Activated CD8-positive, alpha-beta T cell treated with anti-CD3 and anti-CD28 coated beads, Interleukin-2, amount 10 ng/mL, durations not matched to agents 7 days and 5 days (primary cell): ENCODE measurements at regions of chr15 and their contacts with region 1.

Region 1: GRCh38 chr15:88246666-88247446 is 9.7 kb downstream of the NTRK3 start:
- DNase-seq: peak; percentile 76
- ATAC-seq: peak; percentile 89
- H3K4me3 Mint-ChIP-seq: no peak overlapping the region
- H3K27ac Mint-ChIP-seq: no peak overlapping the region
- H3K4me1 Mint-ChIP-seq: no peaks in the 10 kb centered on the region
- H3K27me3 Mint-ChIP-seq: peaks cover 8% of the 10 kb centered on the region

Region 2: GRCh38 chr15:88234711-88235110 is 12.1 kb before region 1 on chr15:
- CTCF ChIA-PET with region 1: interaction called, 12 read pairs
- POLR2A ChIA-PET with region 1: interaction called, 5 read pairs
- DNase-seq: no peak
- ATAC-seq: no peak
- H3K4me3 Mint-ChIP-seq: no peak overlapping the region
- H3K27ac Mint-ChIP-seq: no peak overlapping the region
- H3K4me1 Mint-ChIP-seq: no peaks in the 10 kb centered on the region
- H3K27me3 Mint-ChIP-seq: peaks cover 5% of the 10 kb centered on the region

Region 3: DNA sequence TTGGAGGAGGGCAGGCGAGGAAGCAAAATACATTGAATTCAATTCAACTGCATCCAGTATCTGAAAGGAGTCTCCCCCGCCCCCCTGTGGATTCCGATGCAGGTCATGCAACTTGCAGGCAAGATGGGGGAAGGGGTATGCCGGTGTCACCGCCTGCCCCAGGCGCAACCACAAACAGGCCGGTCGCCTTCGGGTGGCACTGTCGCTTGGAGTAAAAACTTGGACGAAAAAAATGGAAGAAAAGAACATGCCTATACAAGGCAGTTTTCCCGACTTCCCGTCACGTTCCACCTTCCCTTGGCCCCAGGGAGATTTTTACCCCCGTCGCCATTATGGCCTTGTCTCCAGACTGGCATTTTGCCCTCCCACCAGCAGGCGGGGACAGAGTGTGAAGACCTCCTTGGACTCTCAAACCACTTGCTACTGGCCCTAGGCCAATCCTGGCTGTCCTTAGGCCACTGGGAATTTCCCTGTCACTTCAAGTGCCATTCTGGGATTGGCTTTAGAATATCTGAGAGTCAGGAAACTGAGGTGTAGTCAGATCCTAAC is 11.3 kb after region 1 on chr15:
- CTCF ChIA-PET with region 1: interaction called, 11 read pairs
- POLR2A ChIA-PET with region 1: no interaction called
- DNase-seq: no peak
- ATAC-seq: no peak
- H3K4me3 Mint-ChIP-seq: peak overlapping the region; percentile 59
- H3K27ac Mint-ChIP-seq: no peak overlapping the region
- H3K4me1 Mint-ChIP-seq: peaks cover 19% of the 10 kb centered on the region
- H3K27me3 Mint-ChIP-seq: peaks cover 56% of the 10 kb centered on the region

Region 4: DNA sequence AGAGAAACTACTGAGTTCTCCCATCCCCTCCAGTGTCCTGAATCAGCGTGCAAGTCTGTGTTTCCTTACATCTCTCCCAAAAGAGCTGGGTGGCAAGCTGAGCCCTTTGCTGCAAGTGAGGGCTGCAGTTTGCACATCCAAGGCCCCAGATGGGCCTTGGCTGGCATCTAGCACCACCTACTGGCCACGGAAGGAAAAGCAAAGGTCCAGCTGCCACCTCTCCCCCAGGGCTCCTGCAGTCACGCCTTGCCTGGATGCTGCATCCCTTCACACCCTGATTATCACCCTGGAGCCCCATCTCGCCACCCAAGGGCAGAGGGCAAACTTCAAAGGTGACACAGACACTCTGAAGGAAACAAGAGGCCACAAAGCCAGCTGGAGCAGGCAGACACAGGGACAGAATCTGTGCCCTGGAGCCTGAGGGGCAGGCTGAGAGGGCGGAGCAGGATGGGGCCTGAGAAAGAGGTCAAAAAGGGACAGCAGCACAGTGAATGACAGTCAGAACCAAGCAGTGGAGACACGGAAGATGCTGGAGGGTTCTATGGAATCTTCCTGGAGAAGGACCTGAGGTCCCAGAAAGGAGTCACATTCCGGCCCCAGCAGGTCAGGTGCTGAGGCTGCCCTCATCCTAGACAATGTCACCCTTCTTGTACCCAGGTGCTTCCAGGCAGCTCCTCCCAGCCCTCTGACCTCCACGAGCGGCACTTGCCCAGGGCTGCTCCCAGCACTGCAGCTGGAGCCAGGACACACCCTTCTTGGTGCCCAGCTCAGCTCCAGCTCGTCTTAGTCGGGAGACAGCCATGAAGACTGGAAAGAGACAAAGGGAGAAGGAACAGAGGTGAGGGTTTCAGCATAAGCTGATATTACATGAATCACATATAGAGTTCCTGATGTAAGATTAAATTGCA is 28.0 kb after region 1 on chr15:
- CTCF ChIA-PET with region 1: interaction called, 18 read pairs
- POLR2A ChIA-PET with region 1: no interaction called
- DNase-seq: peak; percentile 66
- ATAC-seq: peak; percentile 76
- H3K4me3 Mint-ChIP-seq: no peak overlapping the region
- H3K27ac Mint-ChIP-seq: no peak overlapping the region
- H3K4me1 Mint-ChIP-seq: no peaks in the 10 kb centered on the region
- H3K27me3 Mint-ChIP-seq: peaks cover 11% of the 10 kb centered on the region

Region 5: DNA sequence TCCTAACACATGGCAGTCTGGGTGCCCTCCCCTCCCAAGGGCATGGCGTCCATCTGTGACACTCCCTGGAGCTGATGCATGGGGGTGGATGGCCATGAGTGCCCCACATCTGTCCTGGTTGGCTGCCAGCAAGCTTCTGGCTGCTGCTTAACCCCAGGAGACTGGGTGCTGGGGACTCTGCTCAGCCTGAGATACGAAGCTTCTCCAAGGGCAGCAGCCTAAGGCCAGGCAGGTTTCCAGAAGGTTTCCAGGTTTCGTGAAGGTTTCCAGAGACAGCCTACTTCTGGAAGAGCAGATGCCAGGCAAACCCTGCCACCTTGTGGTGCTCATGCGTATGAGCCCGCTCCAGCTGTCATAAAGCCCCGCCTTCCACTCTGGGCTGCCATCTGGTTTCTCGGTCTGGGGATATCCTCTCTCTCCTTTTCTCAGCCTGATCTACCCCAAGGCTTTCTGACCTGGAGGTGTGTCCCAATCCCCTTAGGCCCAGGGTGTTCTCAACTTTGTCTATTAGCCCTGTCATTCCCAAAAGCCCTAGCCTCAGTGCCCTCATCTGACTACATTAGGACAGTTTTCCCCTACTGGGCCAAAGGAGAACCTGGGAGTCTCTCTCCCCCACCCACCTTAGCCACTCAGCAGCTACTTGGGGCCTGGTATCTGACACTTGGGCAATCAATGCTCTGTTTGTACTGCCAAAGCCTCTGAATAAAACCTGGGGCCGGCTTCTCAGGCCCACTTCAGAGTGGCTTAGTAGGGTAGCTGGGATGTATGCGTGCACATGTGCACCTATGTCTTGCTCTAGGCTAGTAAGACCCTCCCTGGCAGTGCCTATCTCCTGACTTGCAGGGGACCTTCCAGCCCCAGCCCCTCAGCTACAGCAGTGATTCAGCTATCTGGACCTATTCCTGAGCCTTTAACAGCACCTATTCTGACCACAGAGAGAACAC is 208.3 kb after region 1 on chr15:
- CTCF ChIA-PET with region 1: interaction called, 12 read pairs
- POLR2A ChIA-PET with region 1: no interaction called
- DNase-seq: peak; percentile 64
- ATAC-seq: peak; percentile 87
- H3K4me3 Mint-ChIP-seq: no peak overlapping the region
- H3K27ac Mint-ChIP-seq: no peak overlapping the region
- H3K4me1 Mint-ChIP-seq: peaks cover 6% of the 10 kb centered on the region
- H3K27me3 Mint-ChIP-seq: no peaks in the 10 kb centered on the region